ENCODE measurements at regions of chr1 and their contacts with region 1.

Region 1: GRCh38 chr1:173062156-173062938 is 11.6 kb upstream of the TNFSF18 start:
- DNase-seq: peak; percentile 51 to 96
- H3K4me3 ChIP-seq: no peak overlapping the region
- H3K27ac ChIP-seq: peak overlapping the region; percentile 32; the same call in 1 of the 2 replicates
- H3K4me1 ChIP-seq: peaks cover 36% of the 10 kb centered on the region
- H3K27me3 ChIP-seq: no peaks in the 10 kb centered on the region
- CTCF ChIP-seq: no peak

Region 2: DNA sequence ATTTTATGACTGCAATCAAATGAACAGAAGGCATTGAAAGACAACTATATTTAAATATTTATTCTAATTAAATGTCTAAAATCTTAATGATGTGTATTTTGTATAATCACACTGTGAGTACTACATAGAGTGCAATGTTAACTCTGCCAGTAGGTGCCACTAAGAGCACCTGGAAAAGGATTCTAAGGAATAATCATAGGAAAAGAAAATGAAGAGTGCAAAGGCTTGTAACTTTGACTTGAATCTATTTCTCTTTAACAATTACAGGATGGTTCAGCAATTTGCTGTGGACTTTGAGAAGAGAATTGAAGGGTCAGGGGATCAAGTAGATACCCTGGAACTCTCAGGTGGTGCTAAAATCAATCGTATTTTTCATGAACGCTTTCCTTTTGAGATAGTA is 1020.6 kb before region 1 on chr1:
- CTCF ChIA-PET with region 1: interaction called, 10 read pairs
- POLR2A ChIA-PET with region 1: no interaction called
- intact Hi-C with region 1: no loop called
- DNase-seq: no peak
- H3K4me3 ChIP-seq: no peak overlapping the region
- H3K27ac ChIP-seq: no peak overlapping the region
- H3K4me1 ChIP-seq: 0 out of 2 replicates have a peak, but pooled peaks cover 7% of the 10 kb centered on the region
- H3K27me3 ChIP-seq: no peaks in the 10 kb centered on the region
- CTCF ChIP-seq: peak; percentile 57

Region 3: GRCh38 chr1:172976222-172977041 is 85.9 kb before region 1 on chr1:
- CTCF ChIA-PET with region 1: interaction called, 4 read pairs
- POLR2A ChIA-PET with region 1: no interaction called
- intact Hi-C with region 1: loop called (anchors 5 kb)
- DNase-seq: peak; percentile 24 to 61
- H3K4me3 ChIP-seq: no peak overlapping the region
- H3K27ac ChIP-seq: peak overlapping the region; percentile 34; the same call in 1 of the 2 replicates
- H3K4me1 ChIP-seq: peaks cover 36% of the 10 kb centered on the region
- H3K27me3 ChIP-seq: no peaks in the 10 kb centered on the region
- CTCF ChIP-seq: no peak

Region 4: DNA sequence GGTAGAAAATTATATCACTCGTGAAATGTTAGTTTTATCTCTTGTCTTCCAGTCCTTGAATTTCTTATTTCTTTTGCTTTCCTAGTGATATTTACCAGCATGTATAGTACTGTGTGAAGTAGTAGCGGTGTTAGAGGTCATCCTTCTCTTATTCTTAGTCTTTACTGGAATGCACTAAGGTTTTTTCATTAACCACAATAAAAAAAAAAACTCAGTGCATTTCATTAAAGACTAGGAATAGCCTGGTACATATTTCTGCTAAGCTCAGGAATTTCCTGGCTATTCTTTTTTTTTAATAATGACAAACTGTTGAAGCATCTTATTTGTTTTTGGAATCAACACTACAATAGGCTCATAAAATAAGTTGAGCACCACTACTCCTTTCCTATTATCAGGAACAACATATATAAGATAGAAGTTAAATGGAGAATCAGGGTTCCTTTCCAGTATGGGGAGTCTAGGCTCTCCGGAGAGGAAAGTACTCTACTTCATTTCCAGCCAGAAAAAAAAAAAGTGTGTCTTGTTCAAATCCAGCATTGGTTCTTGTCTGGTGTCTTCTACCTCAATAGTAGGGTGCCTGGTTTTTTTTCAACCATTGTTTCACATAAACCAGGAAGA is 71.6 kb before region 1 on chr1:
- CTCF ChIA-PET with region 1: no interaction called
- POLR2A ChIA-PET with region 1: no interaction called
- intact Hi-C with region 1: loop called (anchors 5 kb)
- DNase-seq: no peak
- H3K4me3 ChIP-seq: no peak overlapping the region
- H3K27ac ChIP-seq: no peak overlapping the region
- H3K4me1 ChIP-seq: no peaks in the 10 kb centered on the region
- H3K27me3 ChIP-seq: no peaks in the 10 kb centered on the region
- CTCF ChIP-seq: no peak

Measured in PC-9 (cell line).